ENCODE measurements at regions of chr13 and their contacts with region 1.

Region 1: GRCh38 chr13:107373551-107373950 is 805.6 kb upstream of the ARGLU1 start:
- DNase-seq: peak; percentile 59
- H3K4me3 ChIP-seq: no peak overlapping the region
- H3K27ac ChIP-seq: no peak overlapping the region
- H3K4me1 ChIP-seq: no peaks in the 10 kb centered on the region
- H3K27me3 ChIP-seq: no peaks in the 10 kb centered on the region
- CTCF ChIP-seq: peak; percentile 66

Region 2: DNA sequence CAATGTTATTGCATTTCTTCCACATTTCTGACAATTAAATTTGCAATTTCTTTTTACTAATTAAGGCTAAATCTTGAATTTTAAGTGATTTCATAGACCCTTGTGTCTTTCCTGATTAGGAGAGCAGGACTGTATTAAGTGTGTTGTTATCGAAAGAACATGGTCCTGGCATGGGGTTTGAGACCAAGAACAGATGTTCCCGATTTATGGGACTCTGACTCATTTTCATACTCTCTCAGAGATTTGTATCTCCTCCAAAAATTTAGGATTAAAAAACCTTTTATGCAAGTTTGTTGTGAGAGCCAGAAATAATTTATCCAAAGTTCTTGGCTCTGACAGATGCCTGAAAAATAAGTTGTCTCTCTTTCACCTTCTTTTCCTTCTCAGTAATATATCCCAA is 216.3 kb before region 1 on chr13:
- CTCF ChIA-PET with region 1: no interaction called
- POLR2A ChIA-PET with region 1: no interaction called
- intact Hi-C with region 1: no loop called
- DNase-seq: peak; percentile 48
- H3K4me3 ChIP-seq: no peak overlapping the region
- H3K27ac ChIP-seq: peak overlapping the region; percentile 14
- H3K4me1 ChIP-seq: peaks cover 8% of the 10 kb centered on the region
- H3K27me3 ChIP-seq: no peaks in the 10 kb centered on the region
- CTCF ChIP-seq: no peak

Region 3: DNA sequence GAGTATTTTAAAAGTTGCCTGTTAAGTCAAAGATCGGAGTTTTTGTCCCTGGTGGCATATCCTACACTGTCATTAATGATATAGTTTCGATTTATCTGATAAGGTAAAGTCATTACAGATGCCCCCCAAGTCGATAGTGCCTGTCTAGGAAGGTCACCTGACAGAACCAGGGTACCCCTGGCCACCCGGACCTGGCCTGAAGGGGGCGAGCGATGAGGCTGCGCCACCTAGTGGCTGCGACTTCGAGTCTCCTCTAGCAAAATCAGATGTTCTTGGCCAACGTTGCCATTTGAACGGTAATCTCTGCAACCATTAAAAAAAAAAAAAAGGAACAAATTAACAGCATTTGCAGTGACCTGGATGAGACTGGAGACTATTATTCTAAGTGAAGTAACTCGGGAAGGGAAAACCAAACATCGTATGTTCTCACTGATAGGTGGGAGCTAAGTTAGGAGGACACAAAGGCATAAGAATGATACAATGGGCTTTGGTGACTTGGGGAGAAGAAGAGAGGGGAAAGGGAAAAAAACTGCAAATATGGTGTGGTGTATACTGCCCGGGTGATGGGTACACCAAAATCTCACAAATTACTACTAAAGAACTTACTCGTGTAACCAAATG is 276.6 kb after region 1 on chr13:
- CTCF ChIA-PET with region 1: interaction called, 3 read pairs
- POLR2A ChIA-PET with region 1: no interaction called
- intact Hi-C with region 1: loop called (anchors 2 kb)
- DNase-seq: peak; percentile 64
- H3K4me3 ChIP-seq: no peak overlapping the region
- H3K27ac ChIP-seq: no peak overlapping the region
- H3K4me1 ChIP-seq: no peaks in the 10 kb centered on the region
- H3K27me3 ChIP-seq: no peaks in the 10 kb centered on the region
- CTCF ChIP-seq: peak; percentile 95

Region 4: GRCh38 chr13:108155185-108156106 is 781.9 kb after region 1 on chr13:
- CTCF ChIA-PET with region 1: no interaction called
- POLR2A ChIA-PET with region 1: no interaction called
- intact Hi-C with region 1: loop called (anchors 10 kb)
- DNase-seq: peak; percentile 68
- H3K4me3 ChIP-seq: no peak overlapping the region
- H3K27ac ChIP-seq: no peak overlapping the region
- H3K4me1 ChIP-seq: no peaks in the 10 kb centered on the region
- H3K27me3 ChIP-seq: no peaks in the 10 kb centered on the region
- CTCF ChIP-seq: peak; percentile 91